Activated CD4-positive, alpha-beta T cell treated with anti-CD3 and anti-CD28 coated beads for 36 hours (primary cell): ENCODE measurements at regions of chr18 and their contacts with region 1.

Region 1: GRCh38 chr18:54149078-54149697 is 75.3 kb downstream of the MBD2 start:
- DNase-seq: peak; percentile 83
- ATAC-seq: peak; percentile 82
- H3K4me3 Mint-ChIP-seq: peak overlapping the region; percentile 47
- H3K27ac Mint-ChIP-seq: peak overlapping the region; percentile 94
- H3K4me1 Mint-ChIP-seq: peaks cover 56% of the 10 kb centered on the region
- H3K27me3 Mint-ChIP-seq: no peaks in the 10 kb centered on the region

Region 2: GRCh38 chr18:54162431-54162830 is 13.2 kb after region 1 on chr18:
- CTCF ChIA-PET with region 1: interaction called, 4 read pairs
- POLR2A ChIA-PET with region 1: interaction called, 3 read pairs
- intact Hi-C with region 1: loop called (anchors 1 kb)
- DNase-seq: no peak
- ATAC-seq: no peak
- H3K4me3 Mint-ChIP-seq: no peak overlapping the region
- H3K27ac Mint-ChIP-seq: no peak overlapping the region
- H3K4me1 Mint-ChIP-seq: peaks cover 24% of the 10 kb centered on the region
- H3K27me3 Mint-ChIP-seq: no peaks in the 10 kb centered on the region

Region 3: DNA sequence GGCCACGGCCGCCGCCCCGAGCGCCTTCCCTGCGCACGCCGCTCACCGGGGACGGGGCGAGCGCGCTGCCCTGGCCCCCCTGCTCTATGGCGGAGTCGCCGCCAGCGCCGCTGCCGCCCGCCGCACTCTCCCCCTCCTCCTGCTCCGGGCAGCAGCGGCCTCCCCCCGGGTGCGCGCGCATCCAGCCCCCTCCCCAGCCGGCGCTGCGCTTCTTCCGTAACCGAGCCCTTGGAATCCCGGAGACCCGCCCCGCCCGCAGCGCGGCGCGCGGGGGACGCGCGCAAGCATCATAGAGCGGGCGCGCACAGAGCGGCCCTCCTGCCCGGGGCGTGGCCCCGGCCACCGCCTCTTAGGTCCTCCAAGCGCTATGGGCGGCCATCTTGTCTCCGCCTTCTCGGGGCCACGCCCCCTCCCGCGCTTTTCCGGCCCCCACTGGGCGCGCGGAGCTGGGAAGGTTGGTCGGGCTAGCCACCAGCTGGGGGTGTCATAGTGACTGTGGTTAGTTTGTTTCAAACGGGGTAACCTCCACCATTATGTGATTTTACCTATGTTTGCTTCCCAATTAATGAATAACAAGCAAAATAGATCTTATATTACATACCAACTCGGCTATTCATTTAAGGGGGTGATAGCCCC is 75.3 kb after region 1 on chr18 and contains the start of gene MBD2:
- CTCF ChIA-PET with region 1: interaction called, 8 read pairs
- POLR2A ChIA-PET with region 1: interaction called, 5 read pairs
- intact Hi-C with region 1: loop called (anchors 1 kb)
- DNase-seq: peak; percentile 96
- ATAC-seq: peak; percentile 90
- H3K4me3 Mint-ChIP-seq: peak within 1 kb of the TSS; percentile 98
- H3K27ac Mint-ChIP-seq: peak within 1 kb of the TSS; percentile 98
- H3K4me1 Mint-ChIP-seq: peaks cover 46% of the 10 kb centered on the region
- H3K27me3 Mint-ChIP-seq: no peaks in the 10 kb centered on the region
- total RNA-seq, gene MBD2: 134 to 143 TPM

Region 4: DNA sequence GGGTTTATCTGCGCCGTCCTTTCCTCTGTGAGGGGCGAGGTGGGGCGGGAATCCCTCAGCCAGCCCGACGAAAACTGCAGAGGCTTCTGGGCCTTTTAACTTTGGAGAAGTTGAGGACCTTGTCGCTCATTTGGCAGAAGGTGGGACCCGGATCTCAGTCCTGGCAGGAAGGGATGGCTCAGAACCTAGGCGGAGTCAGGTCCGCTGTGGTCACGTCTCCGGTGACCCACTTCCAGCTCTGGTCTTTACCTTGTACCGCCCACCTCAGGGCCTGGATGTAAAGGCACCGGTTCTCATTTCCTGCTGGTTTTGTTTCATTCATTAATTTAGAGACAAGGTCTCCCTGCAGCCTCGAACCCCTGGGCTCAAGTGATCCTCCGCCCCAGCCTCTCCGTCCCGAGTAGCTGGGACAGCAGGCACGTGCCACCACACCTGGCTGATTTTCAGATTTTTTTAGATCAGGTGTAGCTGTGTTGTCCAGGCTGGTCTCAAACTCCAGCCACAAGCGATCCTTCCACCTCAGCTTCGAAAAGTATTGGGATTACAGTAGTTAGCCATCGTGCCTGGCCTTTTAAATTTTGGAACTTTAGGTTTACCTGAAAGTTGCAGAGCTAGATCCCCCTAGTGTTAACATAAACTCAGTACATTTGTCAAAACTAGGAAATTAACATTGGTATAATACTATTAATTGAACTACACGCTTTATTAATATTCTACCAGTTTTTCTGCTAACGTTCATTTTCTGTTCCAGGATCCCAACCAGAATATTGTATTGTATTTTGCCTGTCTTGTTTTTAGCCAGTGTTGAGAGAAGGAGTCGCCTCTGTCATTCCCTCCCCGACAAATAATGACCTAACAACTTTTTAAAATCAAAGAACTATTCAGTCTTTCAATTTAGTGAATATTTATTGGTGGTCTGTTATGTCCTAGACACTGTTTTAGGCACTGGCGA is 121.0 kb after region 1 on chr18:
- CTCF ChIA-PET with region 1: interaction called, 5 read pairs
- POLR2A ChIA-PET with region 1: interaction called, 8 read pairs
- intact Hi-C with region 1: loop called in 1 of 2 experiments (anchors 1 kb)
- DNase-seq: peak; percentile 75
- ATAC-seq: peak; percentile 63
- H3K4me3 Mint-ChIP-seq: peak overlapping the region; percentile 78
- H3K27ac Mint-ChIP-seq: peak overlapping the region; percentile 99
- H3K4me1 Mint-ChIP-seq: peaks cover 28% of the 10 kb centered on the region
- H3K27me3 Mint-ChIP-seq: no peaks in the 10 kb centered on the region

Region 5: GRCh38 chr18:54357660-54358494 is 208.7 kb after region 1 on chr18 and contains the starts of genes C18orf54 and STARD6:
- CTCF ChIA-PET with region 1: interaction called, 3 read pairs
- POLR2A ChIA-PET with region 1: interaction called, 3 read pairs
- intact Hi-C with region 1: loop called (anchors 1 to 5 kb)
- DNase-seq: peak; percentile 92
- ATAC-seq: peak; percentile 97
- H3K4me3 Mint-ChIP-seq: peak within 1 kb of the TSS; percentile 99
- H3K27ac Mint-ChIP-seq: peak within 1 kb of the TSS; percentile 97
- H3K4me1 Mint-ChIP-seq: peaks cover 16% of the 10 kb centered on the region
- H3K27me3 Mint-ChIP-seq: peaks cover 4% of the 10 kb centered on the region
- total RNA-seq, gene C18orf54: 8.5 to 9.9 TPM
- total RNA-seq, gene STARD6: 0.23 TPM in 1 of 2 experiments, not detected in the other